ENCODE measurements at regions of chr17 and their contacts with region 1.

Region 1: GRCh38 chr17:40062329-40063186 is at the start of gene THRA:
- DNase-seq: peak; percentile 84 to 88
- ATAC-seq: peak; percentile 74 to 82 (median 76)
- H3K4me3 ChIP-seq: peak within 1 kb of the TSS; percentile 100
- H3K27ac ChIP-seq: peak within 1 kb of the TSS; percentile 94
- H3K4me1 ChIP-seq: peaks cover 34% of the 10 kb centered on the region
- H3K27me3 ChIP-seq: no peaks in the 10 kb centered on the region
- CTCF ChIP-seq: peak; percentile 29
- total RNA-seq, gene THRA: 39.5 to 55.1 (median 42.9) TPM

Region 2: DNA sequence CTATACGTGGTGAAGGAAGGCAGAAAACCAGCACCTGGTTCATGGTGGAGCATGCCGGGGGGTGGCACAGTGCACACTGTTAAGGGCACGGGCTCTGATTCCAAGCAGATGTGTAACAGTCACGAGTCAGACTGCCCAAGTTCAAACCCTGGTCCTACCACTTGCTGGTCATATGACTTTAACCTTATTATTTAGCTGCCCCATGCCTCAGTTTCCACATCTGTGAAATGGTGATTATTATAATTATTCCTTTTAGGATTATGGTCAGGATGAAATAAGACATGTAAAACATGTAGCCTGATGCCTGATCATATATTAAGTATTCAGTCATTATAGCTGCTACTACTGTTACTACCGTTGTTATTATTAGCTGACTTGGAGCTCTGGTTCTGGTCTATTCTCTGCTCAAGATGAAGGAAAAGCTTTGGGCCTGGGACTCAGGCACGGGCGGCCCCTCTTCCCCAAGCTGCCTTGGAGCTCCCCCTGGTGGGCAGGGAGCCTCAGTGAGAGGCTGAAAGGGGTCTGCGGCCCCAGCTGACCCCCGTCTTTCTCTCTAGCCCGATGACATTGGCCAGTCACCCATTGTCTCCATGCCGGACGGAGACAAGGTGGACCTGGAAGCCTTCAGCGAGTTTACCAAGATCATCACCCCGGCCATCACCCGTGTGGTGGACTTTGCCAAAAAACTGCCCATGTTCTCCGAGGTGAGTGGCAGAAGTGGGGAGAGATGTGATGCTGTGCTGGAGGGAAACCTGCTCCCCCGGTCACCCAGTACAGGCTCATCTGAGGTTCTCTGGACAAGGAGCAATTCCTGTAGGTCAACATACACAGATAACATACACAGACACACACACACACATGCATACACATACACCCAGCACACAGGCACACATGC is 23.8 kb after region 1 on chr17:
- intact Hi-C with region 1: loop called in 1 of 2 experiments (anchors 1 kb)
- DNase-seq: peak; percentile 75 to 87
- ATAC-seq: peak; percentile 58 to 75 (median 70)
- H3K4me3 ChIP-seq: no peak overlapping the region
- H3K27ac ChIP-seq: peak overlapping the region; percentile 61
- H3K4me1 ChIP-seq: peaks cover 12% of the 10 kb centered on the region
- H3K27me3 ChIP-seq: no peaks in the 10 kb centered on the region
- CTCF ChIP-seq: peak; percentile 91

Region 3: DNA sequence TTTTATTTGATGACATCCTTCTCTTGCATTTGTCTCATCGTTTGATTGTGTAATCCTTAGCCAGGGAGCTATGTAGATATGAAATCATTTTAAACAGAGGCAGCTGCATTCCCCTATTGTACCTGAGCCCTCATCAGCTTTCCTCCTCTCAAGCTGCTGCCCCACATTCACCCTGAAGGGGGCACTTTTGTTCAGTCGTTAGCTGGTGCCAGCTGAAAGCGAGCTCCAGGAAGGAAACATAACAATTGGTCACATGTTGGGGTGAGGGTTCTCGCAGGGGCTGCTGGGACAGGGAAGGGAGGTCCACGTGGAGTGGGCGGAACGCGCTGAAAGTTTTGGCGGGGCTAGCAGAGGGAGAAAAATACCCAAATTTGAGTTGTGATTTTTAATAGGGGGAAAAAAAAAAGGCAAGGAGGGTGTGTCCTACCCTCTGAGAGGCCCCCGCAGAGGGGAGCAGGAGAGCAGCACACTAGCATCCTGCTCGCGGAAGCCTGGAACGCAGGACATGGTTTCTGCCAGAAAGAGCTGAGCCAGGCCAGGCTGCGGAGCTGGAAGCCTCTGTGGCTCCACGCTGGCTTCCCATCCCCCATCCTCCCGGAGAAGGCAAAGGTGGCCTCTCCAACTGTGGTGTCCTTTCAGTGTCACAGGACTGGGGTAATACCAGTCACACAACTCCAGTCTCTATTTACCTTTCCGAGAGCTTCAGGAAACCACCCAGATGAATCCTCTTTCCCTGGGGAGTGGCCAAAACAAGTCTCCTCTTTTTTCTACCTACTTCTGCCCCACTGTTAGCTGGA is 50.8 kb after region 1 on chr17:
- intact Hi-C with region 1: loop called in 1 of 2 experiments (anchors 2 kb)
- DNase-seq: peak; percentile 90 to 94
- ATAC-seq: peak; percentile 75 to 80 (median 76)
- H3K4me3 ChIP-seq: peak overlapping the region; percentile 74
- H3K27ac ChIP-seq: peak overlapping the region; percentile 99
- H3K4me1 ChIP-seq: peaks cover 62% of the 10 kb centered on the region
- H3K27me3 ChIP-seq: no peaks in the 10 kb centered on the region
- CTCF ChIP-seq: peak; percentile 81

Region 4: GRCh38 chr17:40168262-40168832 is 105.8 kb after region 1 on chr17:
- intact Hi-C with region 1: loop called in 1 of 2 experiments (anchors 5 kb)
- DNase-seq: no peak
- ATAC-seq: peak; percentile 68 to 79 (median 70)
- H3K4me3 ChIP-seq: no peak overlapping the region
- H3K27ac ChIP-seq: peak overlapping the region; percentile 31
- H3K4me1 ChIP-seq: no peaks in the 10 kb centered on the region
- H3K27me3 ChIP-seq: no peaks in the 10 kb centered on the region
- CTCF ChIP-seq: peak; percentile 81

Measured in psoas muscle (tissue), 8 donors.